Brain microvascular endothelial cell (primary cell): ENCODE measurements at regions of chr3 and their contacts with region 1.

Region 1: GRCh38 chr3:193768070-193768394 is 175.0 kb downstream of the OPA1 start:
- DNase-seq: peak; percentile 24
- H3K4me3 ChIP-seq: no peak overlapping the region
- H3K27ac ChIP-seq: no peak overlapping the region
- H3K27me3 ChIP-seq: peaks cover 8% of the 10 kb centered on the region
- CTCF ChIP-seq: no peak

Region 2: DNA sequence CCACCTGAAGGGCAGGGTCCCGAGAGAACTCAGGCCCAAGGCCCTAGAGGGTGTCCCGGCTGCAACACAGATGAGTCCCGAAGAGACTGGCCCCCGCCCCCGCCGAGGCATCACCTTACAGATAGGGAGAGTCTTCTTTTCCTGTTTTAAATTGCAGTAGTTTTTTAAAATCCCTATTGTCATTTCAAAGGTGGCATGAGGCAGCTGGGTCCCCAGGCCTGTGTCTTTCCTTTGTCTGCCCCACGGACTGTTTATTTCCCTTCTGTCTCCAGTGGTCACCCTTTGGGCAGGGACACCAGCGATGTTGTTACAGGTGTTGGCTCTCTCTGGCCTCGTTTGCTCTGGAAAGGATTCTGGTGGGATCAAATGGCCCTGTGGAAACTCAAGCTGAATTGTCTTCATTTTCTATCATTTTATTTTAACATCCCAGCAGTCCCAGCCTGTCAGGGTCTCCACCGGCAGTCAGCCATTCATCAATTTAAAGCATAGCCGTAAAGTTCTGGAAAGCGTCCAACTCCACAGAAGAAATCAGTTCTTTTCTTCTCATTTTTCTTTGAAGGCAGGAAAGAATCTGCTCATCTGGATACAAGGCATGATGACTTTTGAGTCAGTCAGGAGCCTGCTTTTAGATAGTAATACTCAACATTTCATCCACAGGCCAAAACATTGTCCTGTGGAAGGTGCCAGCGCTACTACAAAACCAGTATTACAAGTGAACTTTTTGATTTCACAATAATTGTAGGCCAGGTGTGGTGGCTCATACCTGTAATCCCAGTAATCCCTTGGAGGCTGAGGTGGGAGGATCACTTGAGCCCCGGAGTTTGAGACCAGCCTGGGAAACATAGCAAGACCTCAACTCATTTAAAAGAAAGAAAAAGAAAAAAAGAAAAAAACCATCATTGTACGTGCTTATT is 464.2 kb after region 1 on chr3:
- in situ Hi-C with region 1: no loop called
- DNase-seq: no peak
- H3K4me3 ChIP-seq: no peak overlapping the region
- H3K27ac ChIP-seq: no peak overlapping the region
- H3K27me3 ChIP-seq: peaks cover 23% of the 10 kb centered on the region
- CTCF ChIP-seq: no peak

Region 3: DNA sequence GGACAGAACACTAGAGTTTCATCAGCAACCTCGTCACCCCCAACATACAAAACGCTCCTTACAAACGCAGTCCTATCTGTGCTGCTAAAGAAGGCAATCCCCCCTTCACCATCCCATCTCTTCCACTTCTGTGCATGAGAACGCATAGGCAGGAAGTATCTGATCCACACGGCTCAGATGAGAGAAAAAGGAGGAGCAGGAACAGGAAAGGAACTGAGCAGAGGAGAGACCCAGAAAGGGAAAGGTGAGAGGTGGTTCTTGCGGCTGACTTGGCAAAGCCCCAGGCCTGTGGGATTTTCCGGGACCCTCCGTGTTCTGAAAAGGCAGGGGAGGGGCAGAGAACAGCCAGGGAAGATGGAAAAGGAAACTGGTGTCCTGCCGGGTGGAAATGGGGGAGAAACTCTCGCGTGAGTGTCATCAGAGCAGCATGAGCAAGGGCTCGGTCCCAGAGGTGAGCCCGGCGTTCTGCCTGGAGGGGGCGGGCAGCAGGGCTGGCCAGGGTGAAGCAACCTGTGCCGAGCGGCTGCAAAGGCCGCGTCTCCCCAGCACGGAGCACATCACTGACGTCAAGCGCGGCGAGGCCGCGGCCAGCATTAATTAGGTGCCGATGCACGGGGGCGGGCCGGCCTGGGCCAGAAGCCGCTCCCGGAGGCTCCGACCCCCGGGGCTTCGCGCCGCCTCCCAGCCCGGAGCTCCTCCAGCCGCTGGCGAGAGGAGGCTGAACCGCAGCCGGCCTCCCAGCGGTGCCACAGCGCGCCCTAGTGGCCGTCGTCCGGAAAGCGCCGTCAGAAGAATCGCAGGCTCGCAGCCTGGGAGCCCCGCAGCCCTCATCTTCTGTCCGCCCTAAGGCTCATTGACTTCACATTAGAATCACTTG is 547.3 kb after region 1 on chr3:
- in situ Hi-C with region 1: loop called (anchors 25 kb)
- DNase-seq: peak; percentile 52
- H3K4me3 ChIP-seq: peak overlapping the region; percentile 45
- H3K27ac ChIP-seq: no peak overlapping the region
- H3K27me3 ChIP-seq: peaks cover 84% of the 10 kb centered on the region
- CTCF ChIP-seq: peak; percentile 79